KBM-7 (cell line): ENCODE measurements at regions of chr14 and their contacts with region 1.

Region 1: GRCh38 chr14:45253068-45253753 is at the start of gene MIS18BP1:
- DNase-seq: peak; percentile 98

Region 2: GRCh38 chr14:44912041-44912869 is 341.0 kb before region 1 on chr14:
- in situ Hi-C with region 1: loop called (anchors 25 kb)
- DNase-seq: no peak

Region 3: GRCh38 chr14:44988694-44989093 is 264.5 kb before region 1 on chr14:
- in situ Hi-C with region 1: no loop called
- DNase-seq: no peak